Activated T-helper 1 cell treated with anti-CD3 and anti-CD28 coated beads, Interleukin-12 subunit alpha, Interleukin-12 subunit beta, Interleukin-2, Interleukin-4 antibody, amounts not matched to agents 30 ng/mL and 10 ng/mL and 1 ng/mL, durations not matched to agents 14 hours and 24 hours and 36 hours (primary cell): ENCODE measurements at regions of chr20 and their contacts with region 1.

Region 1: DNA sequence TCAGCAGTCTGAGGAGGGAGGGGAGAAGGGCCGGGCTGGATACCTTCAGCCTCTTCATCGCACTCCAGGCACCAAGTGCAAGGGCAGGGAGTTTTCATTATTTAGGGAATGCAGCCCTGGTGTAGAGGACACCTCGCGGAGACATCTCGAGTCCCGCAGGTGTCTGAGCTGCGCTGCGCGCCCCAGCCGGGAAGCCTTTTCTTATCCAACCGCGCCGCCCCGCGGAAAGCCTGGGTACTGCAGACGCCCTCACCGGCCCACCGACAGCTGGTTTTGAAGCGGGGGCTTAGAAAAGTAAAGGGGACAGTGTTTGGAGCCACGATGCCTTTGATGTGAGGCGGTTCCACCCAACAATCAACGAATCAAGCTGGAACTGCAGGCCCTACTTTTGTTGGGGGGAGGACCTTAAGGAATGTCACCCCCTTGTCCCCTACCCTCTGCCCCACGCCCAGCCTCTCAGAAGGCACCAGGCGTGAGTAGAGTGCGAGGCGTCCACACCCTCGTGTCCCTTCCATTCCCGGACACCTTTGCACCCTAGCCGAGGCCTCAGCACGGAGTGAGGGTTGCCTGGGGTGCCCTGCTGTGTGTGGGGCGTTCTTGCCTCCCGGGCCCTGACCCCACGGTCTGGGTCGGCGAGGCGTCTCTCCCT is 8.6 kb downstream of the NKX2-2 start:
- DNase-seq: peak; percentile 60
- H3K4me3 Mint-ChIP-seq: peak overlapping the region; percentile 57
- H3K27ac Mint-ChIP-seq: peak overlapping the region; percentile 63
- H3K4me1 Mint-ChIP-seq: peaks cover 25% of the 10 kb centered on the region
- H3K27me3 Mint-ChIP-seq: peaks cover 51% of the 10 kb centered on the region

Region 2: DNA sequence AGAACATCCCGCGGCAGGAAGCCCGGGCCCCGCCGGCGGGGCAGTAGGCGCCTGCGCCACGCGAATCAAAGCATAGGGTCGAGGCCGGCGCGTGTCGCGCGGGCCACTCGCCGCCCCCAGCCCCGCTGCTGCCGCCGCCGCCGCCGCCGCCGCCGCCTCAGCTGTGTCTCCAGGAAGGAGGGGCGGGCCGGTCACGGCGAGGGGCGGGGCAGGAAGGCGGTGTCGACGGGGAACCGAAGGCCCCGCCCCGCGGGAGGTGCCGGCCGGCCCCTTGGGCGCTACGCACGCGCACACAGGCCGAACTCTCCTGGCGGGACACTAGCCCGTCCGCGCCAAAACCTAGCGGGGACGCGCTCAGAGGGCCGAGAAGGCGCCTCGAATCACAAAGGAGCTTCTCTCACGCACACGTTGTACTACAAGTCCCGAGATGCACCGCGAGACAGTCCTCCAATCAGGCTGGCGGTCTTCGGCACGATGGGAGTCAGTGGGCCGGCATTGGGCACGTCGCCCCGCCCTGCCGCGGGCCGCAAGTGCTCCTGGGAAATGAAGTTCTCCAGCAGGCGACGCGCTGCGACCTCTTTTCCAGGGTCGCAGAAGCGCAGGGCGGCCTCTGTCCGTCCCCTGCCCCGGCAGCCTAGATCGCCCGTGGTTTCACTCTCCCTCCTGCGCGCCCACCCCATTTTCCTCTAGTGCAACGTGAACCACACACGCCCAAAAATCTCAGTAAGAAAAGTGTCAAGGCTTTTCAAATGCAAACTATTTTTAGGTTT is 792.6 kb before region 1 on chr20 and contains the start of gene RALGAPA2:
- intact Hi-C with region 1: no loop called
- DNase-seq: peak; percentile 91
- H3K4me3 Mint-ChIP-seq: peak within 1 kb of the TSS; percentile 95
- H3K27ac Mint-ChIP-seq: peak within 1 kb of the TSS; percentile 89
- H3K4me1 Mint-ChIP-seq: peaks cover 33% of the 10 kb centered on the region
- H3K27me3 Mint-ChIP-seq: no peaks in the 10 kb centered on the region
- total RNA-seq, gene RALGAPA2: 18.0 and 19.6 TPM in 2 replicates

Region 3: DNA sequence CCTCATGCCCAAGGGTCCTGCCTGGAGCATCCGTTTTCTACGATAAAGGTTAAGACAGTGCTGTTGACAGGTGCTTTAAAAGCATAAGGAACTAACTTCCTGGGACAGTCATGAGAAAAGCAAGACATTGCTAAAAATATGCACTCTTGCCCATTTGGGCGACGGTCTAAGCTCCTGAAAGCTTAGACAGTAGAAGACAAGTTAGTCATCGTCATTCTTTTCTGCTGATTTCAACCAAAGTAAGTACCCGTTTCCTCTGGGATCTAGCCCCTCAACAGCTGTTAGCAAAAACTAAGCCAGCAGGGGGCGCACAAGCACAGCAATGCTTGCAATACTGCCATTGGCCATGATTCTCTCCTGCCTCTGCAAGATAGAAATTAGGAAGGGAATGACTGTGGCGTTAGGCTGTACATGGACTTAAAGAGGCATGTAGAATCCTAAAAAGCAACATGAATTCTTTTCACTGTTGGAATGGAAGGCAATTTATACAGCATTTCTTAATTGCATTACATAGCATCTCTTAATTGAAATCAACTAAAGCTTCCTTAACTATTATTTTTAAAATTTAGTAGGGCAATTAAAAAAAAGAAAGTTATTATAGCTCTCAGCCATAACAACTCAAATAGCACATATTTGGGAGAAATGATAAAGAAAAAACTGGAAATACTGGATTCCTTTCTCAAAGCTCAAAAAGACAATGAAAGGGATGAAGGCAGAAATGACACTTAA is 645.0 kb before region 1 on chr20:
- intact Hi-C with region 1: loop called (anchors 1 kb)
- DNase-seq: peak; percentile 64
- H3K4me3 Mint-ChIP-seq: no peak overlapping the region
- H3K27ac Mint-ChIP-seq: no peak overlapping the region
- H3K4me1 Mint-ChIP-seq: no peaks in the 10 kb centered on the region
- H3K27me3 Mint-ChIP-seq: peaks cover 4% of the 10 kb centered on the region

Region 4: DNA sequence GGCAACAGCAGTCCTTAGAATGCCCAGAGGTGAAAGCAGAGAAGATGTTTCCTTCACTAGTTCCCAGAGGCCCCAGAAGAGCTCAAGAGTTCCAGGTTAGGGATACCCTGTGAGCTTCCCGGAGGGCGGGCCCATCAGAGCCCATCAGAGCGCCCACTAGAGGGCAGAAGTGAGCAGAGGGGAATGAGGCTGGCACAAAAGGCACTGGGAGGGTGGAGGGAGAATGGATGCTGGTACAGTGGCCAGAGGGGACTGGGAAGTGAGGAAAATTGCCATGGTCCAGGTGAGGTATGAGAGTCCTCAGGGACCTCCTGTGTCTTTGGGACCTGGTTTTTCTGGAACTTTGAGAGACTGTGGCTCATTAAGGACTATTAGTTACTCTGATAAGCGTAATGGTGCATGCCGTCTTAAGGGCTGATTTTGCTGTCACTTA is 456.4 kb before region 1 on chr20:
- intact Hi-C with region 1: loop called (anchors 1 kb)
- DNase-seq: peak; percentile 4
- H3K4me3 Mint-ChIP-seq: no peak overlapping the region
- H3K27ac Mint-ChIP-seq: no peak overlapping the region
- H3K4me1 Mint-ChIP-seq: no peaks in the 10 kb centered on the region
- H3K27me3 Mint-ChIP-seq: peaks cover 10% of the 10 kb centered on the region

Region 5: DNA sequence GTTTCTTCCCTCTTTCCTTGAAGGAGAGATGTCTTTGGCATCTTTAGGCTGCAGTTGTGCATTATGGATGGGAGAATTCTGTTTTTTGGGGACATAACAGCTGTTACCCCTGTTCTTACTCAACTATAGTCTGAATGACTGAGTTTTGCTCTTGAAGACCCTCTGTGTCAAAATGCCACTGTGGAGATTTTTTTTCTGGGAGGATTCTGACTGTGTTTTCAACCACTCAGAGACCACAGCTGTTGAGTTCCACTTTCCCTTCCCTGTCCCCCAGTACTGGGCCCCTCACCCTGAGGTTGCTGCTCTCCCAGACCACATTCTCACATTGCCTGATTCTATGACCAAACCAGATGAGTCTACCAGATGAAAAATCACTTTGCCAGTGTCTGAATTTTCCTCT is 39.5 kb before region 1 on chr20:
- intact Hi-C with region 1: no loop called
- DNase-seq: no peak
- H3K4me3 Mint-ChIP-seq: no peak overlapping the region
- H3K27ac Mint-ChIP-seq: no peak overlapping the region
- H3K4me1 Mint-ChIP-seq: no peaks in the 10 kb centered on the region
- H3K27me3 Mint-ChIP-seq: no peaks in the 10 kb centered on the region

Region 6: DNA sequence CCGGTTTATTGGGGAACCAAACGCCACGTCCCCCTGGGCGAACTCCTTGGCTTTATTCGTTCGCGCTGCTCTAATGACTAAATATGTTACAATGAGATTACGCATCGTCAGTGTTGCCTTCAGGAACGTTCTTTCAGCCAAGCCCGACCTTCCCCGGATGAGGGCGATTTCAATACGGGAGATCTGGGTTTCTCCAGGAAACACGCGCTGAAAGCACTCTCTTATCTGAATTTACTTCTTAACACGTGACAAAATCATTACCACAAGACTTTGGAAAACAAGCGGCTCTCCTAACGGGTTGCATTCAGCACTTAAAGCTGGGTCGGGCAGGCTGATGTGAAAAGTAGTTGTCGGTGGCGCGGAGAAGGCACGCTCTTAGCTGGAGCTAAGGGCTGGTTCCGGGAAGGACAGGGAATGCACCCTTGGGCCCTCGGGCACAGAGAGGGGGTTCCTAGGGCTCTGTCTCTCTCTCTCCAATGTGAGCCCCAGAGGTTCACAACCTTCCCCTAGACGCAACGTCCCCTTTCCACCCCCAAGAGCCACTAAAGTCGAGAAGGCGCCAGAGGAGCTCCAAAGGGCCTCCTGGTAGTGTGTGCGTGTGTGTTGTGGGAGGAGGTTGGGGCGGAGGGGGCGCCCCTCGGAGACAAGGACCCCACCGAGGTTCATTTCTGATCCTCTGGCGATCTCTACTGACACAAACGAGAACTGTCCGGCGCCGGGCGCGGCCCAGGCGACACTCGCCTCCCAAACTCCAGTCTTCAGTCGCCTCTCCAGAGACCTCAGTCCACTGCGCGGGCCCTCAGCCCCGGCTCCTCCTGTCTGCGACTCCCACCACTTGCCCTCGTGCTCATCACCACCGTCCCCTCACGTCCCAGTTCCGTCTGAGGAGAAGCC is 15.7 kb after region 1 on chr20:
- intact Hi-C with region 1: loop called (anchors 1 kb)
- DNase-seq: no peak
- H3K4me3 Mint-ChIP-seq: no peak overlapping the region
- H3K27ac Mint-ChIP-seq: peak overlapping the region; percentile 76
- H3K4me1 Mint-ChIP-seq: peaks cover 5% of the 10 kb centered on the region
- H3K27me3 Mint-ChIP-seq: peaks cover 83% of the 10 kb centered on the region

Region 7: DNA sequence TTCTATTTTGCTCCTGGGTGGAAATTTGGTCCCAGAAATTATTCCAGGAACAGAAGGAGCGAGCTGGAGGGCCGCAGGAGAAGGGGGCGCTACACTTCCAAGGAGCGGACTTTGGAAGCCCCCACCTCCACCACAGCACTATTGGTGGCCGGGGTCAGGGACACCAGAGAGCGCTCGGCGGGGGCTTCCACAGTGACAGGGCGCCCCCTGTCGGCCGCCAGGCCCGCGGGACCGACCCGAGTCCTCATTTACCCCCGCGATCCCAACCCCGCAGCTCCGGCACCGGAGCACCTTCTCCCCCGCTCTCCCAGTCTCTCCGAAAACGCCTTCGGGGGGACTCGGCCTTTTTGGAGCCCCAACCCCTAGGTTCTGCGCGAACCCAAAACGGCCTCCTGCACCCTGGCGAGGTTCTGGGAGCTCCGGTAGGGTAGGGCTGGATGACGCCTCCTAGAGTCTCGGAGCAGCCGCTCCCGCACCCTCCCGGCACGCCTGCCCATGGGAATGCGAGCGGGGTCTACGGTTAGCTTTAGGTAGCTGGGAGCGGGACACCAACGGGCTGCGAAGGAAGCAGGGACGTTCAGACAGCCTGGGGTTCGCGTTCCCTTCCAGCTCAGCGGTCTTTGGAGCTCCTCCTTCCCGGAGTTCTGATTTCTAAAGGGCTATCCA is 1081.5 kb after region 1 on chr20:
- intact Hi-C with region 1: loop called (anchors 5 kb)
- DNase-seq: no peak
- H3K4me3 Mint-ChIP-seq: no peak overlapping the region
- H3K27ac Mint-ChIP-seq: no peak overlapping the region
- H3K4me1 Mint-ChIP-seq: no peaks in the 10 kb centered on the region
- H3K27me3 Mint-ChIP-seq: peaks cover 36% of the 10 kb centered on the region